Activated CD4-positive, alpha-beta memory T cell treated with anti-CD3 and anti-CD28 coated beads for 36 hours (primary cell): ENCODE measurements at regions of chr13 and their contacts with region 1.

Region 1: DNA sequence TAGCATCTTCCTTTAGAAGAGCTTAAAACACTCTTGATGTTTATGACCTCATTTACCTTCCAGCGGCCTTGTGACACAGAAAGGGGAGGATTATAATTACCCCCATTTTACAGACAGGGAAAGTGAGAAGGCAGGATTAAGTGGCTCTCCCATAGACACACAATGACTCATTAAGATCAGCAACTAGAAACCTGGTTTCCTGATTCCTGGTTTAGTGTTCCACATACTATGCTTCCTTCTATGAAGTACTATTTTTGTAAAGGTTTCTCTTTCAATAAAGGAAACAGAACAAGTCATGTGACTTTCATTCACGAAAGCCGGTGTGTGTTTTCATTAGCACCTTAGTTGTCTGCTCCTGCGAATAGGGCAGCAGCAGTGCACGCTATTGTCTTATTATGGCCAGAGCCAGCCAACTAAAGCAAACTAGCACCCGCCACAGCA is 8.3 kb downstream of the IRS2 start:
- DNase-seq: no peak
- H3K4me3 Mint-ChIP-seq: peak overlapping the region; percentile 37
- H3K27ac Mint-ChIP-seq: no peak overlapping the region
- H3K4me1 Mint-ChIP-seq: peaks cover 61% of the 10 kb centered on the region
- H3K27me3 Mint-ChIP-seq: no peaks in the 10 kb centered on the region

Region 2: GRCh38 chr13:109840201-109840892 is 62.2 kb after region 1 on chr13:
- CTCF ChIA-PET with region 1: no interaction called
- POLR2A ChIA-PET with region 1: no interaction called
- intact Hi-C with region 1: loop called (anchors 5 kb)
- DNase-seq: peak; percentile 53
- H3K4me3 Mint-ChIP-seq: no peak overlapping the region
- H3K27ac Mint-ChIP-seq: peak overlapping the region; percentile 40
- H3K4me1 Mint-ChIP-seq: peaks cover 8% of the 10 kb centered on the region
- H3K27me3 Mint-ChIP-seq: peaks cover 27% of the 10 kb centered on the region